K562 (cell line): ENCODE measurements at regions of chr1 and their contacts with region 1.

Region 1: GRCh38 chr1:117942293-117942692 is 12.8 kb downstream of the WDR3 start:
- DNase-seq: no peak
- ATAC-seq: no peak
- H3K4me3 ChIP-seq: no peak overlapping the region
- H3K27ac ChIP-seq: no peak overlapping the region
- H3K4me1 ChIP-seq: no peaks in the 10 kb centered on the region
- H3K27me3 ChIP-seq: no peaks in the 10 kb centered on the region
- CTCF ChIP-seq: no peak
- EP300 ChIP-seq: no peak
- POLR2A ChIP-seq: no peak
- RAD21 ChIP-seq: no peak

Region 2: DNA sequence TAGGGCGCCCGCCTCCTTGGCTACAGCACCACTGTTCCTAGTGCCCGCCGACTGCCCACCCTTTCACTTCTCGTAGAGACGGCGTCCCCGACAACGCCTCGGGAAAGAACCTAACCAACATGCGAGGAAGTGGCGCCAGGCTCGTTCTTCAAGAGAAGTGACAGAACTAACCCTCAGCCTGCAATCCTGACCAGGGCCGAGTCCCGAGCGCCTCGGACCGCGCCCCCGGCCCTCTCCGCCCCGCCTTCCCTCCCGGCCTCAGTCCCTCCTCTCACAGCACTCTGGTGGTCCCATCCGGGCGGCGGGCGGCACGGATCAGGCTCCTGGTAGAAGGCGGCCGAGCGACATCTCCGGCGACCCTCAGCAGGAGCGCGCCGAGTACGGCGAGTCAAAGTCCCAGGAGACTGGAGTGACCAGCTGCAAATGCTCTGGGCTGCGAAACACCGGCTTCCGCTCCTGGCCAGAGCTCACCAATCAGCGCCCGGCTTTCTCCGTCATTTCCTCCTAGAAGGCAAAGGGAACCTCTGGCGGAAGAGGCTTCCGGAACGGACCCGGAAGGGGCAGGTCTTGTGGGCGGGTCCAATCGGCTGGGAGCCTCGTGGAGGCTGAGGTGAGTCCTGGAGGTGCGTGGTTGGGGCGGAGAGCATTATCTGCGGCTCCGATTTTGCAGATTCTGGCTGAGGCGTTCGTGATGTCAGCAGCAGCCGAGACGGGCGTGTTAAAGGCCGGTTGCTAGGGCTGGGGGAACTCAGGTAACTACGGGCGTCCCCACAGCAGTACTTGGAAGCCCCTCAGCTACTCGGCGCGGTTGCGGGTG is 12.9 kb before region 1 on chr1 and contains the starts of genes GDAP2 and WDR3:
- CTCF ChIA-PET with region 1: no interaction called
- POLR2A ChIA-PET with region 1: interaction called, 30 read pairs
- in situ Hi-C with region 1: no loop called
- intact Hi-C with region 1: no loop called
- DNase-seq: peak; percentile 96 to 99 (median 96)
- ATAC-seq: peak; percentile 96
- H3K4me3 ChIP-seq: peak within 1 kb of the TSS; percentile 78
- H3K27ac ChIP-seq: peak within 1 kb of the TSS; percentile 64
- H3K4me1 ChIP-seq: peaks cover 7 to 8% of the 10 kb centered on the region in 2 experiments; a peak in 2 of 5 replicates
- H3K27me3 ChIP-seq: no peaks in the 10 kb centered on the region
- CTCF ChIP-seq: no peak
- EP300 ChIP-seq: peak; percentile 40
- POLR2A ChIP-seq: peak; percentile 92
- RAD21 ChIP-seq: no peak
- polyA plus RNA-seq, gene GDAP2: 4.1 to 7.2 TPM
- polyA plus RNA-seq, gene WDR3: 51.7 to 122 TPM

Region 3: DNA sequence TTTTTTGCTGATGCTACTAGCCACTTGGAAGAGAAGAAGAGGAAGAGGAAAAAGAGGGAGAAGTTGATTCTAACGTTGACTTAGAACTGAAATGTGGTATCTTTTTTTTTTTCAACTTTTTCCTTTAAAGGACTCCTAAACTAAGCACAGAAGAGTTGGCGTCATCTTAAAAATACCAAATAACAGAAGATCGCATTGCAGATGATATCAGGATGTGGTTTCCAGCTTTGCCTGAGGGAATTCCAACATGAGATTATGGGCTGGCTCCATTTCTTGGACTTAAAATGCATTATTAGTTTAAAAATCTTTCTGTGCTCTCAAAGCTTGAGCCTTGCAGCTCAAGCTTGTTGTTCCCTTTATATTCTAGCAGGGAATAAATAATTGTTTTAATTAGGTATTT is 17.1 kb after region 1 on chr1:
- CTCF ChIA-PET with region 1: no interaction called
- POLR2A ChIA-PET with region 1: interaction called, 3 read pairs
- in situ Hi-C with region 1: no loop called
- intact Hi-C with region 1: loop called (anchors 2 kb)
- DNase-seq: no peak
- ATAC-seq: no peak
- H3K4me3 ChIP-seq: no peak overlapping the region
- H3K27ac ChIP-seq: no peak overlapping the region
- H3K4me1 ChIP-seq: no peaks in the 10 kb centered on the region
- H3K27me3 ChIP-seq: no peaks in the 10 kb centered on the region
- CTCF ChIP-seq: no peak
- EP300 ChIP-seq: no peak
- POLR2A ChIP-seq: no peak
- RAD21 ChIP-seq: no peak

Region 4: GRCh38 chr1:117970252-117970651 is 28.0 kb after region 1 on chr1:
- CTCF ChIA-PET with region 1: no interaction called
- POLR2A ChIA-PET with region 1: no interaction called
- in situ Hi-C with region 1: no loop called
- intact Hi-C with region 1: no loop called
- DNase-seq: no peak
- ATAC-seq: no peak; the same call in 2 of the 3 replicates
- H3K4me3 ChIP-seq: no peak overlapping the region
- H3K27ac ChIP-seq: no peak overlapping the region
- H3K4me1 ChIP-seq: no peaks in the 10 kb centered on the region
- H3K27me3 ChIP-seq: peaks cover 0 to 4% of the 10 kb centered on the region in 2 experiments; a peak in 3 of 5 replicates
- CTCF ChIP-seq: no peak
- EP300 ChIP-seq: no peak
- POLR2A ChIP-seq: no peak
- RAD21 ChIP-seq: no peak

Region 5: DNA sequence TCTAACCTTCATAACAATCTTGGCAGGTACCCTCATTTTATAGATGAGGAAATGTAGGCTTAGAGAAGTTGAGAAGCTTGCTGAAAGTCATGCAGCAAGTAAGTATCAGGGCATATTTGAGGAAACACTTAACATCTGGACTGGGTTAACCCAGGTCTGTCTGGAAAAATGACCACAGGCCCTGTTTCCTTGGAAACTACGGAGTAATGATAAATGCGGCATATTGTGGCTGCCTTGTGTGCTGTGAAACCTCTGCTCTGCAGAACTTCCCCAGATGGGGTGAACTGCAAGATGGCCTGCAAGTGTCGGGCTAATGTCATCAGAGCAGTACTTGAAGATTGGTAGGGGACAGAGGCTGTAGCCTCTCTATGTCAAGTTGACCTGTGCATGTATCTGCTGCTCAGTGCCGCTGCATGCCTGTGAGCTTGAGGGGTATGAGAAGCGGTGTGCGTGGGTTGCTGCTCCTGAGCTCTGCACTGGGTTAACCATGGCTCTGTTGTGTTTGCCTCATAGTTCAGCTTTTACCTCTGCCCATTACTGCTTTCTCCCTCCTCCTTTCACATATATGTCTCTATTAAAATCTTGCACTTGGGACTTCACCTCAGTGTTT is 70.3 kb after region 1 on chr1:
- CTCF ChIA-PET with region 1: no interaction called
- POLR2A ChIA-PET with region 1: no interaction called
- in situ Hi-C with region 1: no loop called
- intact Hi-C with region 1: no loop called
- DNase-seq: no peak
- ATAC-seq: peak; percentile 68
- H3K4me3 ChIP-seq: no peak overlapping the region
- H3K27ac ChIP-seq: no peak overlapping the region
- H3K4me1 ChIP-seq: no peaks in the 10 kb centered on the region
- H3K27me3 ChIP-seq: peaks cover 5 to 16% of the 10 kb centered on the region in 2 experiments; a peak in 3 of 5 replicates
- CTCF ChIP-seq: no peak
- EP300 ChIP-seq: no peak
- POLR2A ChIP-seq: no peak
- RAD21 ChIP-seq: no peak